Esophagus squamous epithelium (tissue), 5 donors: ENCODE measurements at regions of chr7 and their contacts with region 1.

Region 1: GRCh38 chr7:98400542-98401340 is at the start of gene BAIAP2L1:
- DNase-seq: peak; percentile 11
- H3K4me3 ChIP-seq: peak within 1 kb of the TSS; percentile 58 to 89 (median 71)
- H3K27ac ChIP-seq: peak within 1 kb of the TSS; percentile 84 to 91 (median 87)
- H3K4me1 ChIP-seq: peaks cover 0 to 33% (median 11%) of the 10 kb centered on the region in 3 donors
- H3K27me3 ChIP-seq: peaks cover 0 to 33% (median 0%) of the 10 kb centered on the region in 4 donors
- CTCF ChIP-seq: peak in 2 of 6 experiments; percentile 68 to 75
- POLR2A ChIP-seq: peak in 2 of 4 donors; percentile 14 to 72
- total RNA-seq, gene BAIAP2L1: 16.5 to 29.3 (median 20.5) TPM

Region 2: GRCh38 chr7:98211221-98211675 is 189.5 kb before region 1 on chr7 and contains the start of gene BHLHA15:
- intact Hi-C with region 1: no loop called
- DNase-seq: no peak
- H3K4me3 ChIP-seq: peak within 1 kb of the TSS; percentile 27 to 65 (median 38)
- H3K27ac ChIP-seq: peak within 1 kb of the TSS in 1 of 4 donors; percentile 65
- H3K4me1 ChIP-seq: peaks cover 8 to 15% (median 11%) of the 10 kb centered on the region in 3 donors
- H3K27me3 ChIP-seq: peaks cover 0 to 18% (median 0%) of the 10 kb centered on the region in 4 donors
- CTCF ChIP-seq: no peak
- POLR2A ChIP-seq: no peak
- total RNA-seq, gene BHLHA15: 0.82 to 8.0 (median 2.3) TPM

Region 3: GRCh38 chr7:98294796-98295382 is 105.9 kb before region 1 on chr7:
- intact Hi-C with region 1: loop called (anchors 5 kb)
- DNase-seq: no peak
- H3K4me3 ChIP-seq: no peak overlapping the region
- H3K27ac ChIP-seq: peak overlapping the region; percentile 41 to 81 (median 73)
- H3K4me1 ChIP-seq: peaks cover 7 to 41% (median 15%) of the 10 kb centered on the region in 3 donors
- H3K27me3 ChIP-seq: no peaks in the 10 kb centered on the region
- CTCF ChIP-seq: peak in 5 of 6 experiments; percentile 58 to 91 (median 75)
- POLR2A ChIP-seq: no peak

Region 4: GRCh38 chr7:98539879-98540278 is 139.1 kb after region 1 on chr7:
- intact Hi-C with region 1: no loop called
- DNase-seq: no peak
- H3K4me3 ChIP-seq: no peak overlapping the region
- H3K27ac ChIP-seq: no peak overlapping the region
- H3K4me1 ChIP-seq: no peaks in the 10 kb centered on the region
- H3K27me3 ChIP-seq: no peaks in the 10 kb centered on the region
- CTCF ChIP-seq: no peak
- POLR2A ChIP-seq: no peak